CD8-positive, alpha-beta memory T cell (primary cell): ENCODE measurements at regions of chr1 and their contacts with region 1.

Region 1: DNA sequence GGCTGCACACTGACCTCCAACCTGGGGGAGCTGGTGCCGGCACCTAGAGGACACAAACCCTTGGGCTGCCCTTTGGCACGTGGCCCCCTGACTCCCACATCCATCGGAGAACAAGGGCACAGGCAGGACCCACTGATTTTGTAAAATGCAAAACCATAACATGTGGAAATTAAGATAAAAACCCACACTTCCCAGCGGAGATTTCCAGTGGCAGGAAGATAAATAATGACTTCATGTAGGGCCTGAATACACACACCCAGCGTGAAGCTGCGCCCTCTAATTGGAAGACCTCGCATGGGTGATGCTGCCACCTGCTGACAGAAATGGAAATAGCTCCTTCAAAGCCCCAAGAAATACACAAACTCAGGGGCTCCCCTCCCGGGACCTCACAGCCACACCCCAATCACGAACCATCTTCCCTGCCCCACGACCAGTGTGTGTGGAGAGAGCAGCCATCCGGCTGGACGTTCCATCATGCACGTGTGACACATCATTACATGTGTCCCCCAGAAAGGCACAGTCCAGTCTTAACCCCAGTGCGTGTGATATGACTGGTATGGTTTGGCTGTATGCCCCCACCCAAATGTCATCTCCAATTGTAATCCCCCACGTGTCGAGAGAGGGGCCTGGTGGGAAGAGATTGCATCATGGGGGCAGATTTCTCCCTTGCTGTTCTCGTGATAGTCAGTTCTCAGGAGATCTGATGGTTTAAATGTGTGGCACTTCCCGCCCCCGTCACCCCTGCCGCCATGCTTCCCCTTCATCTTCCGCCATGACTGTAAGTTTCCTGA is 5.7 kb upstream of the TPRG1L start:
- DNase-seq: peak; percentile 66 to 80 (median 67)
- H3K4me3 ChIP-seq: no peak overlapping the region
- H3K4me3 Mint-ChIP-seq: peak overlapping the region in 1 of 7 donors; percentile 60
- H3K27ac ChIP-seq: no peak overlapping the region
- H3K27ac Mint-ChIP-seq: peak overlapping the region in 5 of 8 donors; percentile 8 to 77 (median 25)
- H3K4me1 ChIP-seq: peaks cover 19% of the 10 kb centered on the region
- H3K4me1 Mint-ChIP-seq: peaks cover 37 to 43% (median 37%) of the 10 kb centered on the region in 3 donors
- H3K27me3 ChIP-seq: peaks cover 3% of the 10 kb centered on the region
- H3K27me3 Mint-ChIP-seq: peaks cover 4 to 13% of the 10 kb centered on the region in 2 donors

Region 2: DNA sequence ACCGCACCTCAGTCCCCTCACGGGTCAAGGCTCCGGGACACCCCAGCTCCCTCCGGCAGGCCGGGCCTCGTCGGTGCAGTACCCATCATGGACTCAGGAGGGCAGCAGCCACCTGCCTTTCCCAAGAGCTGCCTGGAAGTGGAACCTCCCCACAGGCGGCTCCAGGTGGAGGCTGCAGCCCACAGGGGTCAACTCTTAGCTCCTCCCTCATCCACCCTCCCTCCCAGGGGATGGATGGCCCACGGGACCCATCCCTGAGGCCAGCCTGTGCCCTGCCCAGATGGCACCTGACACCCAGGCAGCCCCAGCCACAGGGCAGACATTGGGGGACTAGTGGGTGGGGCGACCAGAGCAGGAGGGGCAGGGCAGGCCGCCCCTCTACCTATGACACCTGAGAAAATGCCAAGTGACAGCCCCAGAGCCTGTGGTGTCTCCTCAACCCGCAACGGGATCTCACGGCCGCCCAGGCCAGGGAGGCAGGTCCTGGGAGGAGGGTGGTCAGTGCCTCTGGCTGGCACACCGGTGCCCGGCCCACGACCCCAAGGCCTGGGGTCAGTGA is 165.8 kb before region 1 on chr1:
- CTCF ChIA-PET with region 1: interaction called, 47 read pairs
- POLR2A ChIA-PET with region 1: no interaction called
- DNase-seq: peak; percentile 45 to 78 (median 55)
- H3K4me3 ChIP-seq: no peak overlapping the region
- H3K4me3 Mint-ChIP-seq: peak overlapping the region in 6 of 7 donors; percentile 55 to 74 (median 62)
- H3K27ac ChIP-seq: no peak overlapping the region
- H3K27ac Mint-ChIP-seq: peak overlapping the region in 2 of 8 donors; percentile 27 to 47
- H3K4me1 ChIP-seq: peaks cover 11% of the 10 kb centered on the region
- H3K4me1 Mint-ChIP-seq: peaks cover 0 to 6% (median 2%) of the 10 kb centered on the region in 3 donors
- H3K27me3 ChIP-seq: peaks cover 20% of the 10 kb centered on the region
- H3K27me3 Mint-ChIP-seq: peaks cover 4 to 20% of the 10 kb centered on the region in 2 donors

Region 3: GRCh38 chr1:3491291-3492246 is 127.5 kb before region 1 on chr1:
- CTCF ChIA-PET with region 1: interaction called, 15 read pairs
- POLR2A ChIA-PET with region 1: no interaction called
- DNase-seq: peak; percentile 74 to 87 (median 80)
- H3K4me3 ChIP-seq: no peak overlapping the region
- H3K4me3 Mint-ChIP-seq: peak overlapping the region in 5 of 7 donors; percentile 29 to 68 (median 63)
- H3K27ac ChIP-seq: no peak overlapping the region
- H3K27ac Mint-ChIP-seq: peak overlapping the region in 2 of 8 donors; percentile 53 to 65
- H3K4me1 ChIP-seq: no peaks in the 10 kb centered on the region
- H3K4me1 Mint-ChIP-seq: peaks cover 0 to 6% (median 2%) of the 10 kb centered on the region in 3 donors
- H3K27me3 ChIP-seq: no peaks in the 10 kb centered on the region
- H3K27me3 Mint-ChIP-seq: no peaks in the 10 kb centered on the region

Region 4: DNA sequence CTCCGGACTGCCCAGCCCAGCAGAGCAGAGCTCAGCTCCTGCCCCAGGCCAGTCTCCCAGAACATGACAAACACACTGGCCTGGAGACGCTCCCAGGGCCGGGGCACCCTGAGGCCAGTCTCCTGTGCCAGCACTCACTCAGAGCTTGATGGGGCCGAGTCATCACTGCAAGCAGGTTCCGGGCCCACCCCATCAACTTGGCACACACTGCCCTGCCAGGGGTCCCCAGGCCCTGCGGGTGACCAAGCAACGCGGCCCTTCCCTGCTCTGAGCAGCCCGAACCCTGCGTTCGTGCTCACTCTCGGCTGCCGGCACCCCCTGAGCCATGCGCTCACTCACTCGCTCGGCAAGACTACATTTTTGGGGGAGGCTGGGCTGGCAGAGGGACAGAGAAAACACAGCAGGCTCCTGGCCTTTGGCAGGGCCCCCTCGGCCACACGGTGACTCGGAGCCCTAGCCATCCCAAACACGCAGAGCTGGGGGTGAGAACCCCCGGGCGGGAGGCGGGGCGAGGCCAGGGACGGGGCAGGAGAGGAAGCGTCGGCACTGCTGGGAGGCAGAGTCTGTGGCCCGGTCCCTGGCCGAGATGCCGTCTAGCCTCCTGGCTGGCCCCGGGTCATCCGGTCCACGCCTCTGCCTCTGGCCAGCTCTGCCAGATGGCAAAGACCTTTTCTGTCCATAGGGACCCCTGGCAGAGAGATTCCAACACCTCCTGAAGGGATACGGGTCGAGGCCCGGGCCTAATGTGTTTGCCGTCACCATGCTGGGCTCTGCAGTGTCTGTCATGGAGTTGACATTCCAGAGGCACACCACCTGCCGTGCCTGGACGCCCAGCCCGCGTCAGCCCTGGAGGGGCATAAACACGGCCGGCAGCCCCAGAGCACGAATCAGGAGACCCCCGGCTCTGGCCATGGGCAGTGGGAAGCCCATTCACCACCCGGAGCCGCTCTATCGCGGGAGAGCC is 75.7 kb before region 1 on chr1:
- CTCF ChIA-PET with region 1: no interaction called
- POLR2A ChIA-PET with region 1: no interaction called
- DNase-seq: no peak
- H3K4me3 ChIP-seq: no peak overlapping the region
- H3K4me3 Mint-ChIP-seq: no peak overlapping the region
- H3K27ac ChIP-seq: no peak overlapping the region
- H3K27ac Mint-ChIP-seq: no peak overlapping the region
- H3K4me1 ChIP-seq: no peaks in the 10 kb centered on the region
- H3K4me1 Mint-ChIP-seq: no peaks in the 10 kb centered on the region
- H3K27me3 ChIP-seq: no peaks in the 10 kb centered on the region
- H3K27me3 Mint-ChIP-seq: no peaks in the 10 kb centered on the region

Region 5: DNA sequence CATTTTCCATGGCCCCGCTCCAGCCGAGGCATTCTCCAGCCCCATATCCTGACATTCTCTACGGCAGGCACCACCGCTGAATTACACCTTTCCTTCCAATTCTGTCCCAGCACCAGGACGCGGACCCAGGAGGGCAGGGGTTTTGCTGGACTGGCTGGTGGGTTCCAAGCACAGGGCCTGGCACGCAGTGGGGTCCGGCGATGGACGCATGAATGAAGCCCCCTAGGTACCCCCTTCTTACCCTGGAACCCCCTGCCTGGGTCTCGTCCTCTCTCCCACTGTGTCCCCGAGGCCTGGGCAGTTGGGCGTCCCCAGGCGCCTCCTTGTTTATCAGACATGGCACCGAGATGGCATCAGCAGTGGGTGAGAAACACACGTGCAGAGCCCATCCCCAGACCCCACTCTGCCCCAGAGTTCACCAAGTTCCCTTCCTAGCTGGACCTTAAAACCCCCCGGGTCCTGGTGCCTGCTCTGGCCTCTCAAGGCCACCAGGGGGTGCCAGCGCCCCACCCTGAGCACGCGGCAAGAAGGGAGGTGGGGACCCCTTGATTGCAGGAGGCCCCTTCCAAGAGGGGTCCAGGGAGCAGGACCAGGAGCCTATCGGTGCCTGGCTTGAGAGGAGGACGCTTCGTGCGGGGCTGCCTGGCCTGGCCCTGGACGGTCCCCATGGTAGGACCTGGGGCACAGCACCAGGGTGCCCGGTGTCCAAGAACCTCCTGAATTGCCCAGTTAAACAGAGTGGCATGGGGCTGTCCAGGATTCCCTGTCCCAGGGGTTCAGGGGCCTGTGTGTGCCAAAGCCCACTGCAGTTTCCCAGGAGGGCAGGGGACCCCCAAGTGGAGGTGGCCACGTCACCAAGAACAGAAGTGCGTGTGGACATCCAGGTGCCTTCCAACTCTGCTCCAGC is 53.9 kb before region 1 on chr1:
- CTCF ChIA-PET with region 1: interaction called, 18 read pairs
- POLR2A ChIA-PET with region 1: no interaction called
- DNase-seq: peak in 4 of 5 donors; percentile 8 to 50 (median 16)
- H3K4me3 ChIP-seq: no peak overlapping the region
- H3K4me3 Mint-ChIP-seq: no peak overlapping the region
- H3K27ac ChIP-seq: no peak overlapping the region
- H3K27ac Mint-ChIP-seq: peak overlapping the region in 1 of 8 donors; percentile 12
- H3K4me1 ChIP-seq: no peaks in the 10 kb centered on the region
- H3K4me1 Mint-ChIP-seq: no peaks in the 10 kb centered on the region
- H3K27me3 ChIP-seq: no peaks in the 10 kb centered on the region
- H3K27me3 Mint-ChIP-seq: peaks cover 4 to 7% of the 10 kb centered on the region in 2 donors

Region 6: DNA sequence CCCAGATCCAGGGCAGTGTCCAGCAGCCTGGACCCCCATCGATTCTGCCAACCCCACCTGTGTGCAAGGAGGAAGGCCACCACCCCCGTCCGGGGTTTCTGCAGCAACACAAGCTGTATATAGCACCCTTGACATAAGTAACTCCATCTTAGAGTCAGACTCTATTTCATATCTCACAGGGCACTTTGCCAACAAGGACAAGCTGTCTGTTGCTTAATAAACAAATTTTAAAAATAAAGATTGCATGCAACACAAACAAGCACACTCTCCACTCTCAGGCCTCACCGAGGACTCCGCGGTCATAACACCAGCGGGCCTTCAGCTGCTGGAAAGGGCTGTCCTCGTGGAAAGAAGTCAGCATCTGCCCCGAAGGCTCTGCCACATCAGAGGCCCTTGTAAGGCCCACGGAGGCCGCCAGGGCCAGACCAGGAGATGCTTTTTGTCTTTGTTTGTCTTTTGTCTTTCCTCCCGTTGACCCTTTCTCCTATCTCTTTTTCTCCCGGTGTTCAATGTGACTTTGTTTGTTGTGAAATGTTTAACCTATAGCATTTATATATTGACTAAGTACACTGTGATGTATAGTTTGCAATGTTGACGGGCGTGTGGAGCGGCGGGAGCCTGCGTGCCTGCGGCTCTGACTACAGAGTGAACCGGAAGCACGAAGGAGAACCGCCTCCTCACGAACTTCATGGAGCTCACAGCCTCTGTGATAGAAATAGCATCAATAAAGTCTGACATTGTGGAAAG is 32.0 kb before region 1 on chr1:
- CTCF ChIA-PET with region 1: interaction called, 11 read pairs
- POLR2A ChIA-PET with region 1: no interaction called
- DNase-seq: no peak
- H3K4me3 ChIP-seq: no peak overlapping the region
- H3K4me3 Mint-ChIP-seq: no peak overlapping the region
- H3K27ac ChIP-seq: no peak overlapping the region
- H3K27ac Mint-ChIP-seq: peak overlapping the region in 1 of 8 donors; percentile 42
- H3K4me1 ChIP-seq: no peaks in the 10 kb centered on the region
- H3K4me1 Mint-ChIP-seq: no peaks in the 10 kb centered on the region
- H3K27me3 ChIP-seq: no peaks in the 10 kb centered on the region
- H3K27me3 Mint-ChIP-seq: peaks cover 0 to 2% of the 10 kb centered on the region in 2 donors

Region 7: DNA sequence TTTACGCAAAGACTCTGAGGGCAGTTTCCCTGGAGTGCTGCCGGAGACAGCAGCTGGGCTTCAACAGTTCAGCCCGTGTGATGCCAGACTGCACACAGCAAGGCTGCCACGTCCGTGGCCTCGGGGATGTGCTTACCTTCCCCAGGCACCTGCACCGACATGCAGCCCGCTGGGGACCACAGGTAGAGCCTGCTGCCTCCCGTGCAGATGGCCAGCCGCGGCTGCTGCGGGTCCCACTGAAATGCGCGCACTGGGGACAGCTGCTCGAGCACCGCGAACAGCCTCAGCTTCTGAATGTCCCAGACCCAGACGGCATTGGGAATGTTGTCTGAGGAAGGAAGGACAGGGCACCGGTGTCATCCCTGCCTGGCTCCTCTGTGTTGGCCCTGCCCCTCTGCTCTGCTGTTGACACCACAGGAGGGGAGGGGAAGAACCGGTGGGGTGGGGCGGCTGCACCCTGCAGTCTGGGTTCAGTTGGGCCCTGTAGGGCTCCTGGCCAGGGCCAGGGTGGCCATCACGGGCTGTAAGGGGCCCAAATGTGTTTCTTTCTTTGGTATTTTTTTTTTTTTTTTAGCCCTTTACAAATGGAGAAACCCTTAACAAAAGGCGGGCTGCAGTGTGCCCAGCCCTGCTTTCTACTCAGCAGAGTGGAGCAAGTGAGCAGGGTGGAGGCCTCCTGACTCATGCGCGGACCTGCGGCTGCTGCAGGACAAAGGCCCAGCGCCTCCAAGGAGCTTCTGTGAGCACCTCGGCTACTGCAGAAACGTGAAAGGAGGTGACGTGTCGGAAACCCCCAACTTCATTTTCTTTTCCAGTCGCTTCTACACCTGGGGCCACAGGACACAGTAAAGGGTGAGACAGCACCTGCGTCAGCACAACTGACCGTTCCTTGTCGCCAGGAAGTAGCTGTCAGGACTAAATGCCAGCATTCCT is 12.5 kb after region 1 on chr1:
- CTCF ChIA-PET with region 1: interaction called, 36 read pairs
- POLR2A ChIA-PET with region 1: no interaction called
- DNase-seq: no peak
- H3K4me3 ChIP-seq: no peak overlapping the region
- H3K4me3 Mint-ChIP-seq: no peak overlapping the region
- H3K27ac ChIP-seq: no peak overlapping the region
- H3K27ac Mint-ChIP-seq: peak overlapping the region in 1 of 8 donors; percentile 17
- H3K4me1 ChIP-seq: no peaks in the 10 kb centered on the region
- H3K4me1 Mint-ChIP-seq: no peaks in the 10 kb centered on the region
- H3K27me3 ChIP-seq: no peaks in the 10 kb centered on the region
- H3K27me3 Mint-ChIP-seq: no peaks in the 10 kb centered on the region